HEK293 (cell line): ENCODE measurements at regions of chr1 and their contacts with region 1.

Region 1: GRCh38 chr1:168082008-168082876 is 54.5 kb downstream of the GPR161 start:
- H3K4me3 ChIP-seq: no peak overlapping the region
- H3K27ac ChIP-seq: no peak overlapping the region
- H3K4me1 ChIP-seq: no peaks in the 10 kb centered on the region
- CTCF ChIP-seq: peak; percentile 76

Region 2: DNA sequence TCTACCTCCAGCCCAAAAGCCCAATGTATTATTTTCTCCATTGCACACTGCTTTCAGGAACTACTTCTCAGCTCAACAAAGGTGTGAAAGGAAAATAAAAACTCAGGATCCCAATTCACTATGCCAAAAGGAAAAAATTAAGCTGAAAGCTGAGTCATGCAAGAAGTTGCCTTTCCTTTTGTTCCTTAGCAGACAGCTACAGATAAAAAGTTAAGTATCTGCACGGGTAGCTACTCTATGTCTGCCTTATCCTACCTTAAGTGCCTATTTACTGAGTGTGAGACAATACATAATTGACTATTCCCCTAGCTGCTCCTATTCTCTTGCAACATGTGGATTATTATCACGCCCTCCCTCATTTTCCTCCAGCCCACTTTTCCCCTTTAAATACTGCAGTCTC is 252.4 kb before region 1 on chr1:
- CTCF ChIA-PET with region 1: interaction called, 16 read pairs
- POLR2A ChIA-PET with region 1: no interaction called
- H3K4me3 ChIP-seq: no peak overlapping the region
- H3K27ac ChIP-seq: no peak overlapping the region
- H3K4me1 ChIP-seq: no peaks in the 10 kb centered on the region
- CTCF ChIP-seq: no peak

Region 3: DNA sequence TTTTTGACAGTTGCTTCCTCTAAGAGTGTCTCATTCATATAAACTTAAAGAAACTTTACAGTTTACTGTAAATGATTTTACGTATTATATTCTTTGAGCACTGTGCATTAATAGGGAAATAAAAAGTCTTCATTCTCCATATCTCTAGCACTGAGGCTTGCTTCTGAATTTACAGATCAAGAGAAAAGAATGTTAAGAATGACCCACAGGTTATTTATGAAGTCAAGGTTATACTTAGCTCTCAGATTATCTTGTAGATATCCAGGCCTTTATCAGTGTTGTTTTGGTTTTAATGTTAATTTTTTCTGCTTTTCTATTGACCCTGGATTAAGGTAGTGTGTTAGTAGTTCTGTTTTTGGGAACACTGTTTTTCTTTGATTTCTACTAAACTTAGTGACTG is 36.9 kb before region 1 on chr1:
- CTCF ChIA-PET with region 1: interaction called, 14 read pairs
- POLR2A ChIA-PET with region 1: no interaction called
- H3K4me3 ChIP-seq: no peak overlapping the region
- H3K27ac ChIP-seq: no peak overlapping the region
- H3K4me1 ChIP-seq: no peaks in the 10 kb centered on the region
- CTCF ChIP-seq: no peak

Region 4: DNA sequence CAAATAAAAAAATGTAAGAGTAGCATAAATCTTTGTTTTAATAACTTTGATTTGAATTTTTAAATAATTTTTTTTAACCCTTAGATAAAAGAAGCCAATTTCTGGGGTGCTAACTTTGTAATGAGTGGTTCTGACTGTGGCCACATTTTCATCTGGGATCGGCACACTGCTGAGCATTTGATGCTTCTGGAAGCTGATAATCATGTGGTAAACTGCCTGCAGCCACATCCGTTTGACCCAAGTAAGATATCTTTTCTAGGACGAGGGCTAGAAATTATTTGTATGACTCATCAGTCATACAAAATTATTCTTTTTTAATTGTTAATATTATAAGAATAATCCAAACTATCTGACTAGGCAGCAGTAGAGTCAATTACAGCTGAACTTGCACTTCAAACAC is 16.7 kb before region 1 on chr1:
- CTCF ChIA-PET with region 1: interaction called, 55 read pairs
- POLR2A ChIA-PET with region 1: no interaction called
- H3K4me3 ChIP-seq: no peak overlapping the region
- H3K27ac ChIP-seq: no peak overlapping the region
- H3K4me1 ChIP-seq: no peaks in the 10 kb centered on the region
- CTCF ChIP-seq: no peak

Region 5: DNA sequence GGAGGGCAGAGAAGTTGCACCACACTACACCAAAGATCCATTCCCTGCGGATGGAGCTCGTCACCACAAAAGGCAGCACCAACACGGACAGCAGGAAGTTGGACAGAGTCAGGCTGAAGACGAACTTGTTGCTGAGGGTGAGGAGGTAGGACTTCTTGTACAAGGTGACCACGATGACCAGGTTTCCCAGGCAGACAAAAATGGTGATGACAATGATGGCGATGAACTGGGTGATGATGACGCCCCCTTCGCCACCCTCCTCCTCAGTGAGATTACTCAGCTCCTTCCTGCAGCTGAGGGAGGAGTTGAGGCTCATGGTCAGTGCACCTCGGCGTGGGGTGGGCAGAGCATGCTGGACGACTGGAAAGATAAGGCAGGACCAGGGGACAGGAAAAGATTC is 22.3 kb after region 1 on chr1:
- CTCF ChIA-PET with region 1: interaction called, 19 read pairs
- POLR2A ChIA-PET with region 1: no interaction called
- H3K4me3 ChIP-seq: no peak overlapping the region
- H3K27ac ChIP-seq: no peak overlapping the region
- H3K4me1 ChIP-seq: no peaks in the 10 kb centered on the region
- CTCF ChIP-seq: no peak

Region 6: GRCh38 chr1:168136709-168137514 is 54.7 kb after region 1 on chr1 and contains the start of gene GPR161:
- CTCF ChIA-PET with region 1: interaction called, 12 read pairs
- POLR2A ChIA-PET with region 1: interaction called, 5 read pairs
- H3K4me3 ChIP-seq: peak within 1 kb of the TSS; percentile 67
- H3K27ac ChIP-seq: peak within 1 kb of the TSS; percentile 72; the same call in 1 of the 2 replicates
- H3K4me1 ChIP-seq: peaks cover 6% of the 10 kb centered on the region
- CTCF ChIP-seq: peak; percentile 39